Thyroid gland (tissue), 4 donors: ENCODE measurements at regions of chr5 and their contacts with region 1.

Region 1: DNA sequence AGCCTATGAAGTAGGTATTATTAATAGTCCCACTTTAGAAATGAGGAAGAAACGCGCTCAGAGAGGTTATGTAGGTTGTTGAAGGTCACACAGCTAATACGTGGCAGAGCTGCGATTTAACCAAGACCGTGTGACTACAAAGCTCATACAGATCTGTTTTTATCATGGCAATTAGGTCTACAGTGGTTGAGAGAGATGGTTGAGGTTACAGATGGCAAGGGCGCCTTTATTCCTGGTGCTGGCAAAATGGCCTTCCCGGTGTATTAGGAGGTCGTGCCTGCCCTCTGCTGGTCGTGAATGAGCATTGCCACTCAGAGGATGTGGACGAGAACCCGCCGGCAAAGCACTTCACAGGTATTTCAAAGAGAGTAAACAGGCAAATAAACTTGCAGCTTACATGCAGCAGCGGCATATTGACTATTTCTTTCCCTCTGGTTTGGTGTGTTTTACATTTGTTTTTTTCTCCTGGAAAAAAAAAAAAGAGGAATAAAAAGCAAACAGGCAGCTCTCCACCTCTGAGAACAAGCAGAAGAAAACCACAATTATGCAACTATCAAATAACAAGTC is 65.3 kb upstream of the EGFLAM start:
- DNase-seq: peak; percentile 65 to 73
- H3K4me3 ChIP-seq: no peak overlapping the region
- H3K27ac ChIP-seq: no peak overlapping the region
- H3K4me1 ChIP-seq: no peaks in the 10 kb centered on the region
- H3K27me3 ChIP-seq: no peaks in the 10 kb centered on the region
- CTCF ChIP-seq: peak; percentile 37 to 85 (median 78)
- POLR2A ChIP-seq: no peak

Region 2: DNA sequence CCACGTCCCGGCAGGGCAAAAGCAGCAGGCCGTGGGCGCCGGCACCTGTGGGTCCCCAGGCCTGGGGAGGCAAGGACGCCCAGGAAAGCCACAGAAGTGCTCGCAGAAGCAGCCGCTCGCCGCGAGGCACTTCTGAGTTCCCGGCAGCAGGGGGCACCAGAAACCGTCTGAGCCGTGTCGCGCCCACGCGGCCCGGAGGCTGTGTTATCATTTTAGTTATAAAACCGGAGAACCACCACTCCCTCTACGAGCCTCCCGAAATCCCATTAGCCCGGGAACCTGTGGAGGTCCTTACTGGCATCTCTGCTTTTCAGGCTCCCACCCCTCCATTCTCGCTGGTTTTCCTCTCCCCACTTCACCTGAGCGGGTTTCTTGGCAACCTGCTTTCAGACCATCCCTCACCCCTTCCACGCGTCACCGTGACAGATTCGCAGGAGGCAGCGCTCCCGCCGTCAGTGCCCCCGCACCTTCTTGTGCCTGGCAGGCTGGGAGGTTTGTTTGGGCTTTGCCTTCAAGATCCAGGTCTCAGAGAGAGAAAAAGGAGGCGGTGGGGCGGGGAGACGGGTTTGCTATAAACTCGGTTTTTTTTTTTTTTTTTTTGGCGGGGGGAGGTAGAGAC is 355.6 kb before region 1 on chr5:
- intact Hi-C with region 1: loop called (anchors 5 kb)
- DNase-seq: peak; percentile 52 to 64
- H3K4me3 ChIP-seq: peak overlapping the region in 1 of 3 donors; percentile 21
- H3K27ac ChIP-seq: no peak overlapping the region
- H3K4me1 ChIP-seq: peaks cover 37% of the 10 kb centered on the region in 2 donors
- H3K27me3 ChIP-seq: peaks cover 42% of the 10 kb centered on the region
- CTCF ChIP-seq: peak in 5 of 6 experiments; percentile 27 to 76 (median 63)
- POLR2A ChIP-seq: no peak

Region 3: GRCh38 chr5:38099205-38100168 is 93.6 kb before region 1 on chr5:
- intact Hi-C with region 1: no loop called
- DNase-seq: no peak
- H3K4me3 ChIP-seq: no peak overlapping the region
- H3K27ac ChIP-seq: no peak overlapping the region
- H3K4me1 ChIP-seq: no peaks in the 10 kb centered on the region
- H3K27me3 ChIP-seq: no peaks in the 10 kb centered on the region
- CTCF ChIP-seq: no peak
- POLR2A ChIP-seq: no peak

Region 4: DNA sequence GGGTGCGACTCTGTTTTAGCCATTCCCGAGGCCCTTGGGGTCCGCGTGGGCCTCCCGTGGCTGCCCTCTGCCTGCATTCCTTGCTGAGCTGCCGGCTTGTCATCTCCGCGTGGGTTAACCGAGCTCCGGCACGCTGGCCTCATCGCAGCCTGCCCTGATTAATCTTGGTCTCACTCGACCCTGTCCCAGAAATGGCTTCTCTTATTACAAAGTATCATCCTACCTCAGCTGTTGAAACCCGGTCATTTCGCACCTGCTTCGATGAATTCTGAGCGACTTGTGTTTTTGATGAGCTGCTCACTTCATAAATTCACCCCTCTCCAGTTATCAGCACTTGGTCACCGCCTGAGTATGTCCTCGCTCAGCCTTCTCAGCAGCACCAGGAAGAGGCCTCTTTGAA is 58.3 kb before region 1 on chr5:
- intact Hi-C with region 1: no loop called
- DNase-seq: no peak
- H3K4me3 ChIP-seq: no peak overlapping the region
- H3K27ac ChIP-seq: no peak overlapping the region
- H3K4me1 ChIP-seq: no peaks in the 10 kb centered on the region
- H3K27me3 ChIP-seq: no peaks in the 10 kb centered on the region
- CTCF ChIP-seq: no peak
- POLR2A ChIP-seq: no peak